CD8-positive, alpha-beta T cell (primary cell): ENCODE measurements at regions of chr19 and their contacts with region 1.

Region 1: GRCh38 chr19:57632987-57633831 is at the start of gene ZNF211:
- DNase-seq: peak; percentile 70 to 95 (median 89)
- ATAC-seq: peak; percentile 100
- H3K4me3 ChIP-seq: peak within 1 kb of the TSS; percentile 81 to 82
- H3K4me3 Mint-ChIP-seq: peak within 1 kb of the TSS; percentile 96
- H3K27ac ChIP-seq: peak within 1 kb of the TSS; percentile 60 to 78
- H3K27ac Mint-ChIP-seq: peak within 1 kb of the TSS; percentile 94
- H3K4me1 ChIP-seq: peaks cover 13% of the 10 kb centered on the region
- H3K4me1 Mint-ChIP-seq: peaks cover 29% of the 10 kb centered on the region
- H3K27me3 ChIP-seq: no peaks in the 10 kb centered on the region
- H3K27me3 Mint-ChIP-seq: no peaks in the 10 kb centered on the region
- CTCF ChIP-seq: no peak
- total RNA-seq, gene ZNF211: 34.4 to 35.5 TPM

Region 2: GRCh38 chr19:57410877-57411671 is 222.1 kb before region 1 on chr19 and contains the start of gene ZNF17:
- CTCF ChIA-PET with region 1: no interaction called
- POLR2A ChIA-PET with region 1: no interaction called
- intact Hi-C with region 1: loop called in 1 of 2 experiments (anchors 1 kb)
- DNase-seq: peak; percentile 83 to 96 (median 91)
- ATAC-seq: peak; percentile 100
- H3K4me3 ChIP-seq: peak within 1 kb of the TSS; percentile 82 to 99
- H3K4me3 Mint-ChIP-seq: peak within 1 kb of the TSS; percentile 96
- H3K27ac ChIP-seq: peak within 1 kb of the TSS; percentile 67 to 83
- H3K27ac Mint-ChIP-seq: peak within 1 kb of the TSS; percentile 94
- H3K4me1 ChIP-seq: peaks cover 13% of the 10 kb centered on the region
- H3K4me1 Mint-ChIP-seq: peaks cover 35% of the 10 kb centered on the region
- H3K27me3 ChIP-seq: no peaks in the 10 kb centered on the region
- H3K27me3 Mint-ChIP-seq: no peaks in the 10 kb centered on the region
- CTCF ChIP-seq: no peak
- total RNA-seq, gene ZNF17: 15.5 to 18.3 TPM

Region 3: GRCh38 chr19:57559404-57560025 is 73.7 kb before region 1 on chr19 and contains the start of gene ZNF550:
- CTCF ChIA-PET with region 1: no interaction called
- POLR2A ChIA-PET with region 1: no interaction called
- intact Hi-C with region 1: loop called in 1 of 2 experiments (anchors 1 kb)
- DNase-seq: peak; percentile 74 to 92 (median 88)
- ATAC-seq: peak; percentile 96
- H3K4me3 ChIP-seq: peak within 1 kb of the TSS; percentile 77 to 89
- H3K4me3 Mint-ChIP-seq: peak within 1 kb of the TSS; percentile 98
- H3K27ac ChIP-seq: peak within 1 kb of the TSS; percentile 64 to 70
- H3K27ac Mint-ChIP-seq: peak within 1 kb of the TSS; percentile 96
- H3K4me1 ChIP-seq: peaks cover 20% of the 10 kb centered on the region
- H3K4me1 Mint-ChIP-seq: peaks cover 32% of the 10 kb centered on the region
- H3K27me3 ChIP-seq: no peaks in the 10 kb centered on the region
- H3K27me3 Mint-ChIP-seq: no peaks in the 10 kb centered on the region
- CTCF ChIP-seq: no peak
- total RNA-seq, gene ZNF550: 15.4 to 17.6 TPM

Region 4: GRCh38 chr19:57613941-57614743 is 19.1 kb before region 1 on chr19 and contains the start of gene ZNF134:
- CTCF ChIA-PET with region 1: interaction called, 5 read pairs
- POLR2A ChIA-PET with region 1: interaction called, 11 read pairs
- intact Hi-C with region 1: loop called (anchors 1 kb)
- DNase-seq: peak; percentile 77 to 94 (median 91)
- ATAC-seq: peak; percentile 99
- H3K4me3 ChIP-seq: peak within 1 kb of the TSS; percentile 78 to 90
- H3K4me3 Mint-ChIP-seq: peak within 1 kb of the TSS; percentile 90
- H3K27ac ChIP-seq: peak within 1 kb of the TSS; percentile 37 to 63
- H3K27ac Mint-ChIP-seq: peak within 1 kb of the TSS; percentile 90
- H3K4me1 ChIP-seq: peaks cover 13% of the 10 kb centered on the region
- H3K4me1 Mint-ChIP-seq: peaks cover 31% of the 10 kb centered on the region
- H3K27me3 ChIP-seq: no peaks in the 10 kb centered on the region
- H3K27me3 Mint-ChIP-seq: no peaks in the 10 kb centered on the region
- CTCF ChIP-seq: peak; percentile 16
- total RNA-seq, gene ZNF134: 35.2 to 36.5 TPM

Region 5: GRCh38 chr19:57914531-57914930 is 281.3 kb after region 1 on chr19:
- CTCF ChIA-PET with region 1: no interaction called
- POLR2A ChIA-PET with region 1: no interaction called
- intact Hi-C with region 1: loop called in 1 of 2 experiments (anchors 1 kb)
- DNase-seq: no peak
- ATAC-seq: no peak
- H3K4me3 ChIP-seq: no peak overlapping the region
- H3K4me3 Mint-ChIP-seq: peak overlapping the region; percentile 92
- H3K27ac ChIP-seq: no peak overlapping the region
- H3K27ac Mint-ChIP-seq: peak overlapping the region; percentile 49
- H3K4me1 ChIP-seq: peaks cover 12% of the 10 kb centered on the region
- H3K4me1 Mint-ChIP-seq: peaks cover 43% of the 10 kb centered on the region
- H3K27me3 ChIP-seq: no peaks in the 10 kb centered on the region
- H3K27me3 Mint-ChIP-seq: no peaks in the 10 kb centered on the region
- CTCF ChIP-seq: no peak